ENCODE measurements at regions of chr1 and their contacts with region 1.

Region 1: DNA sequence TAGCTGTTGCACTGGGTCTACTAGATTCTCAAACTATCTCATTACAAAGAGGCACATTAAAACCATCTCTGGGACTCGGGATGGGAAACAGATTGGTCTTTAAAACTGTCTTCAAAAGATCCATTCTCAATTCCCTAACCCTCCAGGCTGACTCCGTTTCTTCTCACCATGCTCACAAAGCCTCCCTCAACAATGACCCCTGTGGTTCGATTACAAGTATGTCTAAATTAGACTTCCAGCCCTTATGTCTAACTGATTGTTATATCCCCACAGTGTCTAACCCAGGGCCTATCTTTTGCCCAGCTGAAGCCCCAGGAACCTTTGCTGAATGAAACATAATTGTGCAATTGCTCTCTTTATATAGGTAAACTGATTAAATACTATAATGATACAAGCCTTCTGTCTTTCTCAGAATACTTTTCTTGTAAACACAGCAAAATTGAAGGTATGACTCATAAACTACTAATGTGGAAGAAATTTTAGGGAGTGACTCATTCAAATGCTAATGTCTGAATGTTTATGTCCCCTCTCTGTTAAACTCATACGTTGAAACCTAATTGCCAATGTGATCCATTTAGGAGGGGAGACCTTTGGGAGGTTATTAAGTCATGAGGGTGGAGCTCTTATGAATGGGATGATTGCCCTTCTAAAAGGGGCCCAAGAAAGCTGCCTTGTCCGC is 65.6 kb upstream of the DAB1 start:
- DNase-seq: no peak
- ATAC-seq: no peak
- H3K4me3 ChIP-seq: no peak overlapping the region
- H3K27ac ChIP-seq: no peak overlapping the region
- H3K4me1 ChIP-seq: no peaks in the 10 kb centered on the region
- H3K27me3 ChIP-seq: peaks cover 3 to 6% of the 10 kb centered on the region in 2 experiments; a peak in 3 of 5 replicates
- CTCF ChIP-seq: no peak
- EP300 ChIP-seq: no peak
- POLR2A ChIP-seq: no peak
- RAD21 ChIP-seq: no peak

Region 2: DNA sequence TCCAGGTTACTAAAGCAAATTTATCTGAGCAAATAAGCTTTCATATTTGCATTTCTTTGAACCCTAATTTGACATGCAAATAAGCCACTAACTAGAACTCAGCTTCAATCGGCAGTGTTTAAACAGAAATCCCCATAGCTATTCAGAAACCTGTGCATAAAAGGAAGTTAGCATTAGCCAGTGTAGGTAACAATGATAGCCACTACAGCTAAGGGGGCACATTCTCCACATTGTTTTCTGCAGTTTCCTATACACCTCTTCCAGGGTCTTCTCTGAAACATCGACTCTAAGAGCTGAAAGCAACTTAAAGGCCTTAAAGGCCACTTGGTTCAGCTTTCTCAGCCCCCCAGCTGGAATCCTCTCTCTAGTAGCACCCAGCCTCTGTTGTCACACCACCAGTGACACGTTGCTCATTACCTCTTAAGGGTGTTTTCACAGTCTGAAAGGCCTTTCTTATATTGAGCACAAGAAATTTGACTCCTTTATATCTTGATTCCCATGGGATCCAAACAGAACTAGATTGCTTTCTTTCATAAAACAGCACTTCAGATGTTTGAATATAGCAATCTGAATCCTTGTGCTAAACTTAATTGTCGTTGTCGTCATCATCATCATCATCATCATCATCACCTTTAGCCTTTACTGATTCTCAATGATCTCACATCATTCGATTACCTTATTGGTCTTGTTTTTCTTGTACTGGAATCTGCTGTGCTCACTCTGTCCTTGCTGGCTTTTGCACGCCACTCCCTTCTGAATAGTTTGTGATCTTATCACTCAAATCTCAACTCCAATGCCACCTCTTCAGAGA is 28.3 kb after region 1 on chr1:
- CTCF ChIA-PET with region 1: no interaction called
- POLR2A ChIA-PET with region 1: no interaction called
- in situ Hi-C with region 1: no loop called
- intact Hi-C with region 1: loop called (anchors 1 kb)
- DNase-seq: no peak
- ATAC-seq: no peak
- H3K4me3 ChIP-seq: no peak overlapping the region
- H3K27ac ChIP-seq: no peak overlapping the region
- H3K4me1 ChIP-seq: no peaks in the 10 kb centered on the region
- H3K27me3 ChIP-seq: no peaks in the 10 kb centered on the region
- CTCF ChIP-seq: no peak
- EP300 ChIP-seq: no peak
- POLR2A ChIP-seq: no peak
- RAD21 ChIP-seq: no peak

Region 3: DNA sequence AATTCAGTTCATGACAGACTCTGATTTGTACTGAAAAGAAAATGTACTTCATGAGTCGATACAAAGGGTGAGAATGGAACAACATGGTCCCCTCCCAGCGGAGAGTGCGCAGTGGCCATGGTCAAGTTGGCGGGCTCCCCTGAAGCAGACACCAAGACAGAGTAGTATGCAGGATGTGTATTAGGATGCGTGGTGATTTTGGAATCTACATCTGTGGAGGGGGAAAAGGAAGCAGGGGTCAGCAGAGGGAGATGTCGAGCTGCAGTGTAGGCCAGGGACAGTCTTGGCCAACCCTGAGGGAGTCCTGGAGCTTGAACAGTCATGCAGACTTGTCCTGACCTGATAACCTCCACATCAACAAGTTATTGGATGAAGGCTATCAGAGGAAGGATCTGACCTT is 576.0 kb after region 1 on chr1:
- CTCF ChIA-PET with region 1: no interaction called
- POLR2A ChIA-PET with region 1: no interaction called
- in situ Hi-C with region 1: no loop called
- intact Hi-C with region 1: no loop called
- DNase-seq: peak; percentile 3
- ATAC-seq: peak; percentile 80
- H3K4me3 ChIP-seq: no peak overlapping the region
- H3K27ac ChIP-seq: no peak overlapping the region
- H3K4me1 ChIP-seq: no peaks in the 10 kb centered on the region
- H3K27me3 ChIP-seq: no peaks in the 10 kb centered on the region
- CTCF ChIP-seq: peak; percentile 58
- EP300 ChIP-seq: no peak
- POLR2A ChIP-seq: no peak
- RAD21 ChIP-seq: no peak

Measured in HepG2 (cell line).